Activated CD8-positive, alpha-beta T cell treated with anti-CD3 and anti-CD28 coated beads for 36 hours (primary cell): ENCODE measurements at regions of chr11 and their contacts with region 1.

Region 1: GRCh38 chr11:44911029-44911814 is 39.5 kb downstream of the TP53I11 start:
- DNase-seq: peak; percentile 94
- ATAC-seq: peak; percentile 89
- H3K4me3 Mint-ChIP-seq: no peak overlapping the region
- H3K27ac Mint-ChIP-seq: no peak overlapping the region
- H3K4me1 Mint-ChIP-seq: peaks cover 4% of the 10 kb centered on the region
- H3K27me3 Mint-ChIP-seq: peaks cover 2% of the 10 kb centered on the region
- CTCF ChIP-seq: peak; percentile 68

Region 2: GRCh38 chr11:44727373-44728287 is 183.6 kb before region 1 on chr11:
- CTCF ChIA-PET with region 1: interaction called, 9 read pairs
- POLR2A ChIA-PET with region 1: no interaction called
- intact Hi-C with region 1: loop called (anchors 5 kb)
- DNase-seq: peak; percentile 77
- ATAC-seq: peak; percentile 69
- H3K4me3 Mint-ChIP-seq: peak overlapping the region; percentile 73
- H3K27ac Mint-ChIP-seq: no peak overlapping the region
- H3K4me1 Mint-ChIP-seq: peaks cover 35% of the 10 kb centered on the region
- H3K27me3 Mint-ChIP-seq: peaks cover 25% of the 10 kb centered on the region
- CTCF ChIP-seq: peak; percentile 98

Region 3: DNA sequence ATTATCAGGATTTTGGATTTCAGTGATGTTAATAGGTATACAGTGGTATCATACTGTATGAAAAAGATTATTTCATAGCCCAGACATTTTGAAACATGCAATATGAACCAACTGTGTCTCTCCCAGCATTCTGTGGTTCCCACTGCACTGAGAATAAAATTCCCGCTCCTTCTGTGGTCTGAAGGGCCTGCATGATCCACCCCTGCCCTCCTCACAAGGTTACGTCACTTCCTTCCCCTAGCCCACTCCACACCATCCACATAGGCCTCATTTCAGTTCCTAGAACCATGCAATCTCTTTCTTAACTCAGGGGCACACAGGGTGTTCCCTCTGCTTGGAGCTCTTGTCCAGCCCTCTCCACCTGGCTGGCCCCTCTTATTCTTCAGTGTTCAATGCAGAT is 81.4 kb before region 1 on chr11:
- CTCF ChIA-PET with region 1: no interaction called
- POLR2A ChIA-PET with region 1: no interaction called
- intact Hi-C with region 1: no loop called
- DNase-seq: no peak
- ATAC-seq: no peak
- H3K4me3 Mint-ChIP-seq: no peak overlapping the region
- H3K27ac Mint-ChIP-seq: no peak overlapping the region
- H3K4me1 Mint-ChIP-seq: no peaks in the 10 kb centered on the region
- H3K27me3 Mint-ChIP-seq: peaks cover 3% of the 10 kb centered on the region
- CTCF ChIP-seq: no peak

Region 4: DNA sequence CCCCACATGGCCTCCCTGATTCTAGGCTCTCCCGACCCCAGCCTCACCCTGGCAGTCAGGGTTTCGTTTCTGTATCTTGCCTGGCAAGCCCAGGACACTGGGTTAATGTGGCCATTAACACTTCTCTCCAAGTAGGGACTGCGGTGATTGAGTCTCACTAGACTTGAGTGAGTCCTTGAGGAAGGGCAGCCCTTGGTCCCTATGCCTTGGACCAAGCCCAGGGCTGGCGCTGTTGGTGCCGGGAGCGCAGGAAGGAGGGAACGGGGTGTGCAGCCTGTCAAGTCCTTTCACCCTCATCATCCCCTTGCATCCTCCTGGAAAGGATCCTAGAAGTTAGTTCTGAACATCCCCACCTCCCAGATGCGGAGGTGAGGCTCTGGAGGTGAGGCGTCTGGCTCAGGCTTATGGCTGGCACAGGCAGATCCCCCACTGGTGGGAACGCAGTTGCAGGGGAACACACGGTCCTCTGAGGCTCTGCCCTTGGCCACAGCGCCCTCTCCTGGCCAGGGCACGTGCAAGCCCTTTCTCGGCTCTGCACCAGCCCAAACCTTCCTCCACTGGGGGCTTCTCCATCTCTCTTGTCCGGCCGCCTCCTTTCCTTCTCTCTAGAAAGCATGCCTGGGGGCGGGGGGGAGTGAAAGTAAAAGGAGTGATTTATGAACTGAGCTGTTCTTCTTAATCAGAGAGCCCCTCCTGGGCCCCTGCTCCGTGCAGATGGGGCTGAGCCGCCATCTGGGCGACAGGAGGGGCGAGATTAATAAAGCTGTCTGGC is 17.2 kb before region 1 on chr11:
- CTCF ChIA-PET with region 1: interaction called, 15 read pairs
- POLR2A ChIA-PET with region 1: no interaction called
- intact Hi-C with region 1: no loop called
- DNase-seq: peak; percentile 69
- ATAC-seq: peak; percentile 89
- H3K4me3 Mint-ChIP-seq: no peak overlapping the region
- H3K27ac Mint-ChIP-seq: no peak overlapping the region
- H3K4me1 Mint-ChIP-seq: no peaks in the 10 kb centered on the region
- H3K27me3 Mint-ChIP-seq: no peaks in the 10 kb centered on the region
- CTCF ChIP-seq: peak; percentile 84

Region 5: GRCh38 chr11:44899959-44900358 is 11.3 kb before region 1 on chr11:
- CTCF ChIA-PET with region 1: interaction called, 18 read pairs
- POLR2A ChIA-PET with region 1: interaction called, 3 read pairs
- intact Hi-C with region 1: no loop called
- DNase-seq: peak; percentile 46
- ATAC-seq: peak; percentile 71
- H3K4me3 Mint-ChIP-seq: no peak overlapping the region
- H3K27ac Mint-ChIP-seq: no peak overlapping the region
- H3K4me1 Mint-ChIP-seq: no peaks in the 10 kb centered on the region
- H3K27me3 Mint-ChIP-seq: no peaks in the 10 kb centered on the region
- CTCF ChIP-seq: no peak